ENCODE measurements at regions of chr11 and their contacts with region 1.

Region 1: GRCh38 chr11:45147017-45147728 is 734 bp downstream of the PRDM11 start:
- DNase-seq: peak; percentile 96 to 98
- H3K4me3 ChIP-seq: peak overlapping the region; percentile 74
- H3K27ac ChIP-seq: peak overlapping the region; percentile 97 to 100
- H3K4me1 ChIP-seq: peaks cover 0 to 26% (median 23%) of the 10 kb centered on the region in 4 donors
- H3K27me3 ChIP-seq: no peaks in the 10 kb centered on the region
- CTCF ChIP-seq: peak in 1 of 2 experiments; percentile 10

Region 2: GRCh38 chr11:43944761-43945311 is 1202.3 kb before region 1 on chr11:
- intact Hi-C with region 1: no loop called
- DNase-seq: peak; percentile 80 to 91
- H3K4me3 ChIP-seq: peak overlapping the region; percentile 94 to 96
- H3K27ac ChIP-seq: peak overlapping the region; percentile 98 to 99
- H3K4me1 ChIP-seq: peaks cover 0 to 53% (median 20%) of the 10 kb centered on the region in 4 donors
- H3K27me3 ChIP-seq: no peaks in the 10 kb centered on the region
- CTCF ChIP-seq: peak; percentile 85 to 93

Region 3: GRCh38 chr11:45102810-45103621 is 44.2 kb before region 1 on chr11:
- intact Hi-C with region 1: no loop called
- DNase-seq: no peak
- H3K4me3 ChIP-seq: no peak overlapping the region
- H3K27ac ChIP-seq: no peak overlapping the region
- H3K4me1 ChIP-seq: peaks cover 0 to 19% (median 6%) of the 10 kb centered on the region in 4 donors
- H3K27me3 ChIP-seq: peaks cover 0 to 14% of the 10 kb centered on the region in 2 donors
- CTCF ChIP-seq: peak; percentile 93 to 97

Region 4: DNA sequence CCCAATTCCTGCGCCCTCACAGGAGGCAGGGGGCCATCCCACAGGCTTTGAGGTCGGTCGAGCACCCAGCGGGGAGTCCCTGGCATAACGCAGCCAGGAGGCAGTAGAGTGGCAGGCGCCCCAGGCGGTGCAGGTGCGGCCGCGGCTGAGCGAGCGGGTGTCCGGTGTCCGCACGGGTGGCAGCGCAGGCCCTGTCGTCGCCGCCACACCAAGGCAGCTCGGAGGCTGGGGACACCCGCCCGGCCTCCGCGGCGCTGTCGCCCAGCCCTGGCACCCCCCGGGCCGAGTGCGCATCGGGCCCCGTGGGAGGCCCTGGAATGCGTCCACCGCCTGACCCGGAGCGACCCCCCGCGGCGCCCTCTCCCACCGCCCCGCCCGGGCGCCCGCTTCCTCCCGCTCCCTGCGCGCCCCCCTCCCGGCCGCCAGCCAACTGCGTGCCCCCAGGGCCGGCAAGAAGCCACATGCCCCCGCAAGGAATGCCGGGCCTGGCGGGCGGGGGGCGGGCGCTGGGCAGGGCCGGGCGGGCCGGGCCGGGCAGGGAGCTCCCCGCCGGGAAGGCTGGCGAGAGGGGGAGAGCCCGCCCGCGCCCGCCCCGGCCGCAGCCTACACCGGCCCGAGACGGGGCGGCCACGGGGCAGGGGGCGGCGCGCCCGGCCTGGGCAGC is 33.1 kb after region 1 on chr11:
- intact Hi-C with region 1: loop called (anchors 1 kb)
- DNase-seq: peak in 1 of 2 donors; percentile 81
- H3K4me3 ChIP-seq: peak overlapping the region; percentile 52 to 58
- H3K27ac ChIP-seq: peak overlapping the region; percentile 78 to 88
- H3K4me1 ChIP-seq: peaks cover 0 to 53% (median 42%) of the 10 kb centered on the region in 4 donors
- H3K27me3 ChIP-seq: no peaks in the 10 kb centered on the region
- CTCF ChIP-seq: peak in 1 of 2 experiments; percentile 53

Region 5: GRCh38 chr11:45209891-45210699 is 62.9 kb after region 1 on chr11:
- intact Hi-C with region 1: loop called (anchors 10 kb)
- DNase-seq: peak; percentile 84 to 94
- H3K4me3 ChIP-seq: peak overlapping the region; percentile 15 to 20
- H3K27ac ChIP-seq: peak overlapping the region; percentile 69 to 86
- H3K4me1 ChIP-seq: peaks cover 0 to 33% (median 24%) of the 10 kb centered on the region in 4 donors
- H3K27me3 ChIP-seq: no peaks in the 10 kb centered on the region
- CTCF ChIP-seq: peak; percentile 14 to 27